ENCODE measurements at regions of chr7 and their contacts with region 1.

Region 1: GRCh38 chr7:75866489-75867389 is 12.1 kb upstream of the RHBDD2 start:
- DNase-seq: peak; percentile 57 to 73 (median 73)
- ATAC-seq: peak; percentile 90 to 92
- H3K4me3 ChIP-seq: no peak overlapping the region
- H3K27ac ChIP-seq: no peak overlapping the region
- H3K4me1 ChIP-seq: peaks cover 3% of the 10 kb centered on the region
- H3K27me3 ChIP-seq: no peaks in the 10 kb centered on the region

Region 2: GRCh38 chr7:76020031-76020714 is 153.4 kb after region 1 on chr7:
- intact Hi-C with region 1: loop called (anchors 1 to 5 kb)
- DNase-seq: peak; percentile 79 to 90 (median 90)
- ATAC-seq: peak; percentile 74 to 78
- H3K4me3 ChIP-seq: no peak overlapping the region
- H3K27ac ChIP-seq: no peak overlapping the region
- H3K4me1 ChIP-seq: no peaks in the 10 kb centered on the region
- H3K27me3 ChIP-seq: no peaks in the 10 kb centered on the region

Region 3: DNA sequence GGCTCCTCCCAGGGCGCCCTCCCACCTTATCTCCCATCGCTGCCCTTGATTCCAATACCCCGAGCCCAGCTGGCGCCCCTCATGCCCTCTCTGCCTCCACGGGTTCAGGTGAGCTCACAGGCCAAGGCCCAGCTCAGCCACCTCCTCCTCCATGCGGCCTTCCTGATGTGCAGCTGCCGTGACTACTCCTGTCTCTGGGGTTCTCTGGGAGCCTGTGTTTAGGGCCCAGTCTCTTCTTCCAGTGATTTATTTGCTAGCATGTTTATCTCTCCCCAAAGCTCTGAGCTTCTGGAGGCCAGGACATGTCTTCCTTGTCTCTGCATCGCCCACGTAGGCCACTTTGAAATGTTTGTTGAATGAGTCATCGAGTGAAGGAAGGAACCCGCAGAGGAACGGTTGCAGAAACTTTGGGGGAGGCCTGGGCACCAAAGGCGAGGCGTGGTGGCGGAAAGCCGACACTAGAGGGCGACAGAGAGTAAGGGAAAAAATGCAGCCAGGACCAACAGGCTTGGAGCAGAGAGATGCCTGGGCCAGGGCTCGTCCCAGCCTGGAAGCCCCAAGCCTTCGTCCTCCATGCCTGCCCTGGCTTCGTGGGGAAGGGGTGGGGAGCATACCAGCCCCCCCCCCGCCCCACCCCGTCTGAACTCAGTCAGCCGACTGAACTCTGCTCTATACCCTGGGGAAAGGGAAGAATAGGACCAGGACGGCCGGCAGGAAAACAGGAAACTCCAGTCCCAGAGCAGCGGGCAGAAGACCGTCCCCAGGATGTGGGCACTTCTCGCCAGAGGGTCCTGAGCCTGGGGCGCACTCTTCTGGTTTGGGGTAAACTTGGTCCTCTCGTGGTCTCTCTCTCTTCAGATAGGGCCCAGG is 424.8 kb after region 1 on chr7:
- intact Hi-C with region 1: no loop called
- DNase-seq: peak; percentile 94 to 96 (median 95)
- ATAC-seq: peak; percentile 85 to 88
- H3K4me3 ChIP-seq: peak overlapping the region; percentile 11
- H3K27ac ChIP-seq: peak overlapping the region; percentile 97
- H3K4me1 ChIP-seq: peaks cover 17% of the 10 kb centered on the region
- H3K27me3 ChIP-seq: no peaks in the 10 kb centered on the region

Region 4: DNA sequence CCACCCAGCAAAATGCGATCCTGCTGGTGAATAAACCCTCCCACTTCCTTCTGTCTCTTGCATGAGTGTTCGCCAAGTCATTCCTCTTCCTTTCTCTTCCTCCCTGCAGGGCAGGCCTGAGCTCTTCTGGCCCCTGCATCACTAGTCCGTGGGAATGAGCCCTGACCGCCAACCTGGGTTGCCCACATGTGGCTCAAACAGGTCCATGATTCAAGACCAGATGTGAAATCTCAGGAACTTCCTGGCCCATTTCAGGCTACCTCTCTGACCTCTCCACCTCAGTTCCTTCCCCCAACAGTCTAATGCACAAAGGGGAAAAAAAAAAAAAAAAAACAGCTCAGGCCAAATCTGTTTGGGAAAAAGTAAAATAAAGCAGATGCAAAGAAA is 497.5 kb after region 1 on chr7:
- intact Hi-C with region 1: no loop called
- DNase-seq: peak in 1 of 3 donors; percentile 76
- ATAC-seq: peak; percentile 1 to 2
- H3K4me3 ChIP-seq: no peak overlapping the region
- H3K27ac ChIP-seq: peak overlapping the region; percentile 87
- H3K4me1 ChIP-seq: peaks cover 6% of the 10 kb centered on the region
- H3K27me3 ChIP-seq: no peaks in the 10 kb centered on the region